Activated CD4-positive, alpha-beta memory T cell treated with anti-CD3 and anti-CD28 coated beads for 36 hours (primary cell): ENCODE measurements at regions of chr15 and their contacts with region 1.

Region 1: DNA sequence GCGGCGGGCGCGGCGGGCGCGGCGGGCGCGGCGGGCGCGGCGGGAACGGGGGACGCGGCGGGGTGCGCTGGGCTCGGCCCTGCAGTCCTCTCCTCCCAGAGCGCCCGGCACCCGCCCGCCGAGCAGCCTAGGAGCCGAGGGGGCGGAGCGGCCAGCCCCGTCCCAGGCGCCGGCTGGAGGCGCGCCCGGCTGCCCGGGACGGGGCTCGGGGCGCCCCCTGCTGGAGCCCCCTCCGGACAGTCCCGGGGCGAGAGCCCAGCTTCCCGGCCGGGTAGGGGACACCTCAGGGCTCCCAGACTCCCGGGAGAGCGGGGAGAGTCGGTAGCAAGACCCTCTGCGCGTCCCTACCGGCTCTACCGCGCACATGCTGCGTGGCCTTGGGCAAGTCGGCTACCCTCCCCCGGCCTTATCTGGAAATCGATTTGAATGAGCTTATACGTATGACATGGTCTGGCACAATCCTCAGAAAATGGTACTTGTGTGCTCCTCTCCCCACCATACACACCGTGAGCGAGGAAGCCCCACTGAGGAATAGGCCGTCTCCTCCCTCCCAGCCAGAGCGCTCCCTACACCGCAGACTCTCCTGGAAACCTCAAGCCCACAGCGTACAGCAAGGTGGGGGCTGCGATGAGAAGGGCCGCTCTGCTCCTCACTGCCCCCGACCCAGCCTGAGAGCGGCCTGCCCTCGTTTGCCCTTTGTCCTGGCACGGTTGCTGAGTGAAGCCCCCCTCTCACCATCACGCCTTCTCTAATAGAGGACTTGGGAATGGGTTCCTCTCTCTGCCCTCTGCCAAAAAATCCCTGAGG is at the start of gene DAPK2:
- DNase-seq: peak; percentile 75
- H3K4me3 Mint-ChIP-seq: peak within 1 kb of the TSS; percentile 53
- H3K27ac Mint-ChIP-seq: no peak within 1 kb of the TSS
- H3K4me1 Mint-ChIP-seq: peaks cover 4% of the 10 kb centered on the region
- H3K27me3 Mint-ChIP-seq: peaks cover 17% of the 10 kb centered on the region
- total RNA-seq, gene DAPK2: 0.81 to 0.87 TPM

Region 2: GRCh38 chr15:63826528-63826927 is 220.0 kb before region 1 on chr15:
- CTCF ChIA-PET with region 1: interaction called, 14 read pairs
- POLR2A ChIA-PET with region 1: no interaction called
- intact Hi-C with region 1: loop called (anchors 10 kb)
- DNase-seq: no peak
- H3K4me3 Mint-ChIP-seq: no peak overlapping the region
- H3K27ac Mint-ChIP-seq: no peak overlapping the region
- H3K4me1 Mint-ChIP-seq: peaks cover 63% of the 10 kb centered on the region
- H3K27me3 Mint-ChIP-seq: no peaks in the 10 kb centered on the region

Region 3: DNA sequence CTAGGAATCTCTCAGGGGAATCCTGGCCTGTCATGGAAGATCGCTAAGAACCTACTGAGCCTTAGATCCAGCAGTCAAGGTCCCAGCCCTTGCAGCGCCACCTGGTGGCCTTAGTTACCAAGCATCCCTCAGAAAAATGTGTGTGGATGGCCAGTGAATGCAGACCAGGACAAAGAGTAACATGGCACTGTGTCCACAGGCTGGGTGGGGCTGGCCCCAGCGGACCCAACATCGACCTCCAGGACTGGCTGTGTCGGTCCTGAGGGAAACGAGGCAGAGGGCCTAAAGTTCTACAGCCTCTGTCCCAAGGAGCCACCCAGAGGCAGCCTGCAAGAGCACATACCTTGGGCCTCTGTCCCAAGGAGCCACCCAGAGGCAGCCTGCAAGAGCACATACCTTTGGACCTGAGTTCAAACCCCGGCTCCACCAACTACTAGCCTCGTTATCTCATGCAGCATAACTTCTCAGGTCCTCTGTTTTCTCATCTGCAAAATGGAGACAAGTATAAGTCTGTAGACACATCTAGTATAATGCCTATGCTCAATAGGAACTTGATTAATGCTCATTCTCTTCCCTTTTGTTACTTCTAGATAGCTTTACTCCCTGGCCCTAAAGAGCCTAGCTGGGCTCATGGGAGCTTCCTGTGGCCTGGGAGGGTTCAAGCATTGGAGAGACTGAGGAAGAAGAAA is 155.3 kb before region 1 on chr15:
- CTCF ChIA-PET with region 1: interaction called, 11 read pairs
- POLR2A ChIA-PET with region 1: no interaction called
- intact Hi-C with region 1: loop called (anchors 5 kb)
- DNase-seq: peak; percentile 85
- H3K4me3 Mint-ChIP-seq: no peak overlapping the region
- H3K27ac Mint-ChIP-seq: no peak overlapping the region
- H3K4me1 Mint-ChIP-seq: peaks cover 40% of the 10 kb centered on the region
- H3K27me3 Mint-ChIP-seq: no peaks in the 10 kb centered on the region

Region 4: GRCh38 chr15:63915873-63916771 is 130.4 kb before region 1 on chr15:
- CTCF ChIA-PET with region 1: interaction called, 14 read pairs
- POLR2A ChIA-PET with region 1: no interaction called
- intact Hi-C with region 1: no loop called
- DNase-seq: no peak
- H3K4me3 Mint-ChIP-seq: no peak overlapping the region
- H3K27ac Mint-ChIP-seq: no peak overlapping the region
- H3K4me1 Mint-ChIP-seq: peaks cover 14% of the 10 kb centered on the region
- H3K27me3 Mint-ChIP-seq: no peaks in the 10 kb centered on the region

Region 5: DNA sequence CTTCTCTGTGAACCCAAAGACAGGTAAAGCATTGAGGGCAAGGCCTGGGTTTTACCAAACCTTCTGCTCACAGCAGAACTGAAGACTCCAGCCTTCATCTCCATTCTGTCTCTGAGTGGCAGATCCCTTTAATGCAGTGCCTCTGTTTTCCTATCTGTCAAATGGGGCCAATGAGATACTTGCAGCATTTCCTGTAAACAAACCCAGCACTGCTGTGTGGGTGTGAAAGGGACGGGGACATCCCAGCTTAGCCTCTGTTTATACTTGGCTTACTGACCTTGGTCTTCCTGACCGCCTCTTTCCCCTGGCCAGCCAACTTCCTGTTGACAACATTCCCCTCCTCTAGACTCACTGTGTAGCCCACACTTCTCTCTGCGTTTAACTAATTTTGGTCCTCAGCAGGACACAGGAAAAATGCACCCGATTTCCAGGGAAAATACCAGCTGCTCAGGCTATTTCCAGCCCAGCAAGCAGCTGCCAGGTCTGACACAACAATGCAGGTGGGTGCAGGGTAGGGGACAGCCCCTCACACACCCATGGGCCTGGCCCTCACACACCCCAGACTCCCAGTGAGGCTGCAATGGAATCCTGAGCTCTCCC is 106.9 kb before region 1 on chr15:
- CTCF ChIA-PET with region 1: interaction called, 160 read pairs
- POLR2A ChIA-PET with region 1: interaction called, 6 read pairs
- intact Hi-C with region 1: no loop called
- DNase-seq: peak; percentile 46
- H3K4me3 Mint-ChIP-seq: no peak overlapping the region
- H3K27ac Mint-ChIP-seq: peak overlapping the region; percentile 84
- H3K4me1 Mint-ChIP-seq: peaks cover 28% of the 10 kb centered on the region
- H3K27me3 Mint-ChIP-seq: no peaks in the 10 kb centered on the region

Region 6: GRCh38 chr15:63986751-63987341 is 59.7 kb before region 1 on chr15:
- CTCF ChIA-PET with region 1: interaction called, 17 read pairs
- POLR2A ChIA-PET with region 1: no interaction called
- intact Hi-C with region 1: loop called (anchors 5 kb)
- DNase-seq: peak; percentile 20
- H3K4me3 Mint-ChIP-seq: no peak overlapping the region
- H3K27ac Mint-ChIP-seq: peak overlapping the region; percentile 38
- H3K4me1 Mint-ChIP-seq: peaks cover 13% of the 10 kb centered on the region
- H3K27me3 Mint-ChIP-seq: no peaks in the 10 kb centered on the region

Region 7: GRCh38 chr15:64067564-64068030 is 21.0 kb after region 1 on chr15:
- CTCF ChIA-PET with region 1: interaction called, 30 read pairs
- POLR2A ChIA-PET with region 1: no interaction called
- intact Hi-C with region 1: no loop called
- DNase-seq: peak; percentile 73
- H3K4me3 Mint-ChIP-seq: no peak overlapping the region
- H3K27ac Mint-ChIP-seq: peak overlapping the region; percentile 38
- H3K4me1 Mint-ChIP-seq: peaks cover 4% of the 10 kb centered on the region
- H3K27me3 Mint-ChIP-seq: no peaks in the 10 kb centered on the region